Activated CD8-positive, alpha-beta T cell treated with anti-CD3 and anti-CD28 coated beads for 36 hours (primary cell): ENCODE measurements at regions of chr1 and their contacts with region 1.

Region 1: DNA sequence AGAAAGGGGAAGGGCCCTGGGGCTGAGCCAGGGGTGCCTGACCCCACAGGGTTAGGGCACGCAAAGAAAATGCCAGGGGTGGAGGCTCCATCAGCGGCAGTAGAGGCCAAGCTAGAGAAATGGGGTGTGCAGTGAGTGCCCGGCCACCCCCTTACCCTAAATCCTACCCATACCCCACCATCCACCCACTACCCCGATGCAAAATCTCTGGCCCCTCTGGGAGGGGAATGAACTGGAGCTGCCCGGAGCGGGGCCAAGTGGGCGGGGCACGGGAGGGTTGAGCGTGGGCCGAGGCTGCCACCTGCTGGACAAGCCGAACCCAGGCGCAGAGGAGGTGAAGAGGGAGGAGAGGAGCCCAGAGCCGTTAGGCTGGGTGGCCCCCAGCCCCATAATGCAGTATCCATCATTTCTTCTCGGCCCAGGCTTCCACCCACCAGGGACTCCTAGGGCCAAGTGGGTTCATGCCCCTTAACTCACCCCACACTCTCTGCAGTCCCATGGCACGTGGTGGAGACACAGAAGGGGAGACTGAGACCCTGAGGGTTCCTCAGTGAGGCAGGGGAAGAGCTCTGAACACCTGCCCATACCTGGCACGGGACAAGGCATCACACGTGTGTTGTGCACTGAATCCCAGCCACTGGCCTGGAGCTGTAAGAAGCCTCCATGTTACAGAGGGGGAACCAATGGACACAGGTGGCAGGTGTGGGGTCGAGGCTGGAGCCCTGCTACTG is 1.4 kb upstream of the C1QC start:
- DNase-seq: peak; percentile 73
- ATAC-seq: peak; percentile 83
- H3K4me3 Mint-ChIP-seq: no peak overlapping the region
- H3K27ac Mint-ChIP-seq: no peak overlapping the region
- H3K4me1 Mint-ChIP-seq: no peaks in the 10 kb centered on the region
- H3K27me3 Mint-ChIP-seq: peaks cover 9% of the 10 kb centered on the region
- CTCF ChIP-seq: peak; percentile 83

Region 2: DNA sequence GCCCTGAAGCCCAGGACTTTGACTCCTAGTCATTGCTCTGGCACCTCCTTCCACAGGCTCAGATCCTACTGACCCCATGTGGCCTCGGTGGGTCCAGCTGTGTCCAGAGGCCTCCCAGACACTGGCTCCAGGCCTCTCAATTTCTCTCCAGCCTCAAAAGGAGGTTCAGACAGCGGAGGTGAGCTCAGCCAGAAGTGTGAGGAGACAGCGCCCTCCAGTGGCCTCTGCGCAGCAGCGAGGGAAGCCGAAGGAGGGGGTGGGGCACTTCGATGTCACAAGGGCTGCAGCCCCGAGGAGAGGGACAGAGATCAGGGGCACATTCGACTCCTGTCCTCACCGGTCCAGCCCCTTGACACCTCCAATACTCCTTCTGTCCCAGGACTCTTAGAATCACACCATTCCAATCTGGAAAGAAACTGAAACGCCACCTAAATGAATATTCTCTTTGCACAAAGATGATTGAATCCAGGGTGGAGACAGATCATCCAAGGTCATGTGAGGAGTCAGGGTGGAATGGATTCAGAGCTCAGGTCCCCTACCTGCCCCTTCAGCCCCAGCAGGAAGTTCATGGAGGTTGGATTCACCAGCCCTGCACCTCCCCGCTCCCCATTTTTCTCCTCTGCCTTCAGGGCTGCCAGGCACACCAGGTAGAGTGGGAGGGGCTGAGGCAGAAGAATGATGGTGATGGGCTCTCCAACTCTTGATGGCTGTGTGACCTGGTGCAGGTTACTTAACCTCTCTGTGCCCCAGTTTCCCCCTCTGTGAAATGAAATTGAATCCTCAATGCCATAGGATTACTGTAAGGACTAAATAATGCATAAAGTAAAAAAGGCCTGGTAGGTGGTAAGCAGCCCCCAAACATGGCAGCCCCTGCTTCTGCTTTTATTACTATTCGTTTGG is 225.3 kb before region 1 on chr1:
- CTCF ChIA-PET with region 1: interaction called, 16 read pairs
- POLR2A ChIA-PET with region 1: no interaction called
- intact Hi-C with region 1: loop called (anchors 5 kb)
- DNase-seq: peak; percentile 82
- ATAC-seq: peak; percentile 83
- H3K4me3 Mint-ChIP-seq: no peak overlapping the region
- H3K27ac Mint-ChIP-seq: no peak overlapping the region
- H3K4me1 Mint-ChIP-seq: peaks cover 5% of the 10 kb centered on the region
- H3K27me3 Mint-ChIP-seq: peaks cover 36% of the 10 kb centered on the region
- CTCF ChIP-seq: peak; percentile 90

Region 3: DNA sequence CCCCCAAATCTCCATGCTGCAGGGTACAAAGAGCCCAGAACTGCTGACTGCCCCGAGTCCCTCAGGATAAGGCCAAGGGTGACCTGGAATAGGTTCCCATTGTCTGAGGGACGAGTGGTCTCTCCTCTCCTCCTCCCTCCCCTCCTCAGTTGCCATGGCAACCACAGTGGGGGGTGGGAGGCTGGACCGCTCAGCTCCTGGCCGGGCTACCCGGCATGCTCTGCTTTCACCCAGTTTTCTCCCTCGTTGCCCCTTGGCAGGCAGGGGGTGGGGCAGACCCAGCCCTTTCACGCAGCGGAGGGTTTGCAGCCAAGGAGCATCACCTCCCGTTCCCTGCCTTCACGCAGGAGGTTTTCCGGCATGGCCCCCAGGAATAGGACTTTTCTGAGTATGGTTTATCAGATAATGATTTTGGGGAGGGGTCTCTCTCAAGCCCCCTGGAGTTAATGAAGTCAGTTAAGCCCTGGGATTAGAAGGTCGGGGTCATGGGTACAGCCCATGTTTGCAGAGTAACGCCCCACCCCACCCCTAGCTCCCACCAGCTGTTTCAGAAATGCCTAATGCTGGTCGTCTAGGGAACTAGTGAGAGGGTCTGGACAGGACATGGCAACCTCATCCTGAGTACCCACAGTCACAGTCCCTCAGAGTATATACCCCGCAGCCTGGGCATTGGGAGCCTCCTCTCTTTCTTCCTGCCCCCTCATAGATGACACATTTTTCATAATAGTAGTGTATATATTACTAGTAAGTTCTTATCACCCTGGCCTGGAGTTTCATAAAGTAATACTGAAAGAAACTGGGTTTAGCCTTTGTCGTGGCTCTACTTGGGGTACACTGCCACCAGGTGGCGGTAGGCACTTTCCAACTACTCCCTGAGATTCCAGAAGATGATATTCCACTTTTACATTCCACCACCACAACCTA is 31.7 kb after region 1 on chr1:
- CTCF ChIA-PET with region 1: no interaction called
- POLR2A ChIA-PET with region 1: no interaction called
- intact Hi-C with region 1: no loop called
- DNase-seq: peak; percentile 52
- ATAC-seq: peak; percentile 70
- H3K4me3 Mint-ChIP-seq: no peak overlapping the region
- H3K27ac Mint-ChIP-seq: no peak overlapping the region
- H3K4me1 Mint-ChIP-seq: no peaks in the 10 kb centered on the region
- H3K27me3 Mint-ChIP-seq: peaks cover 39% of the 10 kb centered on the region
- CTCF ChIP-seq: peak; percentile 48